PC-9 (cell line): ENCODE measurements at regions of chr14 and their contacts with region 1.

Region 1: GRCh38 chr14:52124791-52125661 is 56.2 kb upstream of the NID2 start:
- DNase-seq: peak; percentile 63 to 72
- H3K4me3 ChIP-seq: peak overlapping the region; percentile 9; the same call in 1 of the 2 replicates
- H3K27ac ChIP-seq: peak overlapping the region; percentile 67
- H3K4me1 ChIP-seq: peaks cover 21% of the 10 kb centered on the region
- H3K27me3 ChIP-seq: no peaks in the 10 kb centered on the region
- CTCF ChIP-seq: no peak

Region 2: DNA sequence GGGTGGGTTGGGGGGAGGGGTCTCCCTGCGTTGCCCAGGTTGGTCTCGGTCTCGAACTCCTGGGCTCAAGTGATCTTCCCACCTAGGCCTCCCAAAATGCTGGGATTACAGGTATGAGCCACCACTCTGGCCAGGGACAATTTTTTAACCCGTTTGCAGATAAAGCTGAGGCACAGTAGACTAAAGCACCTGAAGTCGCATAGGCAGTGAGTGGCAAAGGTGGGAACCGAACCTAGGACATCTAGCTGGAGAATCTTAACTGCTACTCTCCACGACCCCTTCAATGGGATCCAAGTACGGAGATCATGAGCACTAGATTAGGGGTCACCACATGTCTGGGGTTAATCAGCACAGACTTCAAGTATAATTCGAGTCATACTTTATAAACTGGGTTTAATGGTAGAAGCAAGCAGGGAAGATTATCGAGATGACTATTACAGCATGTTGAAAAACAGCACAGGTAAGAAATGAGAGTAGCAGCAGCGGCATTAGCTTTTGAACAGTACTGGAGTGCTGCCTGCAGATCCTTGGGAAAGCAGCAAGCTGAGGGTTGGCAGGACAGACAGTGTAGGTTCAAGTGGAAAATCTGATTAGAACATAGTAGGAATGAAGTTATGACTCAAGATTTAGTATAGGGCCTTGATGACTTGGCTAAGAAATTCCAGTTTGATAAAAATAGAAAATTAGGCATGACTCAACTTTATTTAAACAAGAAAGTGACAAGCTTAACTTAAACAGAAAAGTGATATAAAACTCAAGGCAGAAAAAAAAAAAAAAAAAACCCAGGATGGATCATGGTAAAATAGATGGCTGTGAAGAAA is 80.0 kb before region 1 on chr14:
- CTCF ChIA-PET with region 1: interaction called, 5 read pairs
- POLR2A ChIA-PET with region 1: interaction called, 12 read pairs
- intact Hi-C with region 1: no loop called
- DNase-seq: peak; percentile 20 to 64
- H3K4me3 ChIP-seq: no peak overlapping the region
- H3K27ac ChIP-seq: peak overlapping the region; percentile 53
- H3K4me1 ChIP-seq: peaks cover 14% of the 10 kb centered on the region
- H3K27me3 ChIP-seq: no peaks in the 10 kb centered on the region
- CTCF ChIP-seq: no peak